ENCODE measurements at regions of chr22 and their contacts with region 1.

Region 1: GRCh38 chr22:45276507-45277105 is 8.1 kb upstream of the UPK3A start:
- DNase-seq: no peak
- H3K4me3 ChIP-seq: no peak overlapping the region
- H3K27ac ChIP-seq: no peak overlapping the region
- H3K4me1 ChIP-seq: no peaks in the 10 kb centered on the region
- H3K27me3 ChIP-seq: peaks cover 2% of the 10 kb centered on the region
- CTCF ChIP-seq: no peak

Region 2: DNA sequence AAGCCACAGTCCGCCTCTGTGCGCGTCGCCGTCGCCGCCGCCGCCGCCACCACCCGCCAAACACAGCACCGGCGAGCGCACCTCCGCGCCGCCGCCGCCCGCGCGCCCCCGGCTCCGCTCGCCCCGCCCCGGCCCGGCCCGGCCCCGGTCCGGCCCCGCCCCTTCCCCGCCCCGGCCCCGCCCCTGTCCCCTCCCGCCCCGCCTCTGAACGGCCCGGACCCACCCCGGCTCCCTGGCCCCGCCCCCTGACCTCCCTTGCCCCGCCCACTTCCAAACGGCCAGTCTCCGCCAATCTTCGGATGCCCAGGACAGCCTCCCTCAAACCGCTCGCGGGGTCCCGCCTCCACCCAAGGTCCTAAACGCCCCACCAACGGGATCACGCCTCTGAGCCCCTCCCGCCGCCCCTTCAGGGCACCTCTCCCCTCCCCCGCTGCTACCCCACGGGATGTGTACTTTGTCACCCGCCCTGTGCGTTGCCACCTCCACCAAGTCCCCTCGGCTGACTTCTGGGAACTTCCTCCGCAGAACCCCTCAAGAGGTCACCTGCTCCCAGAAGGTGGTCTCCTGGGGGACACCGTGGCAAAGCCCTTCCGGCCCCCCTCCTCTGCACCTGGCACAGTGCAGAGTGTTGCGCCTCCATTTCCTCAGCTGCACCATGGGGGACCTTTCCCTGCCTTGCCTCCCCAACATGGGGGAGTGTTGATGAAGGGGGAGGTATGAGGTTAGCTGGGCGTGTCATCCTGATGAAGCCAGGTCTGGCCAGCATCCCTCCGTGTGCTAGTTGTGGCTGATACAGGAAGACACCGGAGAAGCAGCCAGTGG is 35.6 kb before region 1 on chr22 and contains the start of gene KIAA0930:
- CTCF ChIA-PET with region 1: no interaction called
- dilution Hi-C with region 1: no loop called
- in situ Hi-C with region 1: no loop called
- intact Hi-C with region 1: no loop called
- DNase-seq: peak; percentile 41
- H3K4me3 ChIP-seq: peak within 1 kb of the TSS; percentile 91 to 96 (median 96)
- H3K27ac ChIP-seq: peak within 1 kb of the TSS; percentile 60
- H3K4me1 ChIP-seq: peaks cover 28% of the 10 kb centered on the region
- H3K27me3 ChIP-seq: no peaks in the 10 kb centered on the region
- CTCF ChIP-seq: no peak
- total RNA-seq, gene KIAA0930: 164 to 199 TPM

Region 3: DNA sequence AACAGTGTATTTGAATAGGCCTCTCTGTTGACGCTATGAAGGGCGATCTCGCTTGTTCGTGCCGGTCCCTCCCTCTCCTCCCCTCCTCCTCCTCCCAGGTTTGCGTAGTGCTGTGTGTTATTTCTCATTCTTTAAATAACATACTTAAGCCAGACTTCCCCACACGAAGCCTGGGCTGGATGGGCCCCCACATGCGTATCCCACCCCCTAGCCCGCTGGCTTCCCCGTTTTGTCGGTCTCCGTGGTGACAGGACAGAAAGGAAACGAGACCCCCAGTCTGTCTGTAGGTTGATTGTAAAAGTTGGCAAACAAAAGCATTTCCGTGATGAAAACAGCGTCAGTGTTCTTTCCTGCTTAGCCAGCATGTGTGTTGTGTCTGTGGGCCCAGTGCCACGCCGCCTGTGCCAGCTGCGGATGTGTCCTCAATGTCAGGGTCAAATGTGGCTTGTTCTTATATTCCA is 60.4 kb after region 1 on chr22:
- CTCF ChIA-PET with region 1: no interaction called
- dilution Hi-C with region 1: loop called (anchors 5 kb)
- in situ Hi-C with region 1: no loop called
- intact Hi-C with region 1: no loop called
- DNase-seq: no peak
- H3K4me3 ChIP-seq: no peak overlapping the region
- H3K27ac ChIP-seq: no peak overlapping the region
- H3K4me1 ChIP-seq: peaks cover 24% of the 10 kb centered on the region
- H3K27me3 ChIP-seq: no peaks in the 10 kb centered on the region
- CTCF ChIP-seq: no peak

Region 4: DNA sequence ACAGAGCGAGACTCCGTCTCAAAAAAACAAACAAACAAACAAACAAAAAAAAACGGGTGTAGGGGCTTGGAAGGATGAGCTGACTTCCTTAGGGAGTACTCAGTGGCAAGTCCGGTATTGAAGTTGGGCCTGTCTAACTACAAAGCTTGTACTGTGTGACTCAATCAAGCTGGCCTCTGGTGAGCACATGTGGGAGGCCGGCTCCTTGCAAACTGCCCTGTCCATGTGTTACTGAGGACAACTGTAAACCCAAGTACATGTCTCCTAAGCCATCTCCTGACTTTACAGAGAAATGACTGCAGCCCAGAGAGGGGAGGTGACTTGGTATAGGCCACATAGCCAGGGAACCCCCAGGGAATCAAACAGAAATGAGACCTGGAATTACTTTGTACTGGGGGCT is 148.5 kb after region 1 on chr22:
- CTCF ChIA-PET with region 1: no interaction called
- dilution Hi-C with region 1: loop called (anchors 5 kb)
- in situ Hi-C with region 1: loop called in 1 of 2 experiments (anchors 5 kb)
- intact Hi-C with region 1: no loop called
- DNase-seq: no peak
- H3K4me3 ChIP-seq: no peak overlapping the region
- H3K27ac ChIP-seq: no peak overlapping the region
- H3K4me1 ChIP-seq: no peaks in the 10 kb centered on the region
- H3K27me3 ChIP-seq: no peaks in the 10 kb centered on the region
- CTCF ChIP-seq: no peak

Region 5: GRCh38 chr22:45483918-45484499 is 207.4 kb after region 1 on chr22:
- CTCF ChIA-PET with region 1: no interaction called
- dilution Hi-C with region 1: no loop called
- in situ Hi-C with region 1: no loop called
- intact Hi-C with region 1: no loop called
- DNase-seq: no peak
- H3K4me3 ChIP-seq: no peak overlapping the region
- H3K27ac ChIP-seq: no peak overlapping the region
- H3K4me1 ChIP-seq: no peaks in the 10 kb centered on the region
- H3K27me3 ChIP-seq: no peaks in the 10 kb centered on the region
- CTCF ChIP-seq: no peak

Region 6: DNA sequence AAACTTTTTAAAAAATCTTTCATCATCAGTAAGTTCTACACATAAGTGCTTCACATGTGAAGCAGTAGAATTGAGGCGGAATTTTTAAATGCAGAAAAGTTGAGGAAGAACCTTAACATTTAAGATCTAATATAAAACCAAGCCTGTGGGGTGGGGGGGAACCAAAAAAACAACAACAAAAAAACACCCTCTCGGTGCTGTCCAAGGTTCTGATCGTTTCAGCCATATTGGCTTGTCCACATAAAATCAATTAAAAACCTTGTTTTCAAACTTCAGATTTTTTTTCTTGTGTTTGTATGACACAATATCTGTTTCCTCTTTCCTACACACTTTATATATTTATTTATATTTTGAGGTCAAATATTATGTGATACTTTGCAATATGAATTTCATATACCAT is 570.3 kb after region 1 on chr22:
- CTCF ChIA-PET with region 1: no interaction called
- dilution Hi-C with region 1: no loop called
- in situ Hi-C with region 1: no loop called
- intact Hi-C with region 1: no loop called
- DNase-seq: no peak
- H3K4me3 ChIP-seq: no peak overlapping the region
- H3K27ac ChIP-seq: no peak overlapping the region
- H3K4me1 ChIP-seq: no peaks in the 10 kb centered on the region
- H3K27me3 ChIP-seq: no peaks in the 10 kb centered on the region
- CTCF ChIP-seq: no peak

Region 7: GRCh38 chr22:45984316-45984916 is 707.8 kb after region 1 on chr22:
- CTCF ChIA-PET with region 1: no interaction called
- dilution Hi-C with region 1: no loop called
- in situ Hi-C with region 1: no loop called
- intact Hi-C with region 1: no loop called
- DNase-seq: no peak
- H3K4me3 ChIP-seq: no peak overlapping the region
- H3K27ac ChIP-seq: no peak overlapping the region
- H3K4me1 ChIP-seq: no peaks in the 10 kb centered on the region
- H3K27me3 ChIP-seq: no peaks in the 10 kb centered on the region
- CTCF ChIP-seq: no peak